HAP-1 (cell line): ENCODE measurements at regions of chr3 and their contacts with region 1.

Region 1: GRCh38 chr3:71652781-71653413 is 69.4 kb upstream of the FOXP1 start:
- DNase-seq: peak; percentile 62 to 74
- H3K4me3 ChIP-seq: no peak overlapping the region
- H3K4me1 ChIP-seq: peaks cover 3% of the 10 kb centered on the region; the same call in 1 of the 2 replicates
- H3K27me3 ChIP-seq: no peaks in the 10 kb centered on the region

Region 2: DNA sequence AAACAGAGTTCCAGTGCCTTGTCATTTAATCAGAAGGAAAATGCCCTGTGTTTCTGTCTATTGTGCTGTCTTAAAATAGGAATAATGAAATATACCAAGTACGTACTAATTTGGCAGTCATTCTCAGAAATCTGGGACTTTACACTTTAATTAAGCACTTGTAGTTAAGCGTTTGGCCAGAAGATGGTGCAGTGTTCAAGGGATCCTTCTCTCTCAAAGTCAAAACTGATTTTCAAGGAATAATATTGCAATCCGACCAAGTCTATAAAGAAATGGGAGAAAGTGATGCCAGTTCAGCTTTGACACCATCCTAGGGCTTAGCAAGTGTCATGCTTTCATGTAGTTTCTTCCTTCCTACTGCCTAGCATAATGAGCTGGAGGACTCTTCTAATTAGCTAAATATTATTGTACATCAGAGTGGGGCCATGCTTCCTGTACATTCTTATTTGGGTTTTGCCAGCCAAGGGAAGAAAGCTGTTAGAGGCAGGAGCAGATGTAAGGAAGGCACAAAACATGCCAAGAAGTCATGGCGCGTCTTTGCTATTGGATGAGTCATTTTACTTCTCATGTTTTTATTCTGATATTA is 1588.6 kb before region 1 on chr3:
- in situ Hi-C with region 1: loop called (anchors 10 kb)
- DNase-seq: peak; percentile 60 to 64
- H3K4me3 ChIP-seq: no peak overlapping the region
- H3K4me1 ChIP-seq: peaks cover 2% of the 10 kb centered on the region
- H3K27me3 ChIP-seq: no peaks in the 10 kb centered on the region

Region 3: GRCh38 chr3:70531063-70531657 is 1121.7 kb before region 1 on chr3:
- in situ Hi-C with region 1: loop called (anchors 25 kb)
- DNase-seq: peak in 1 of 2 experiments; percentile 68
- H3K4me3 ChIP-seq: no peak overlapping the region
- H3K4me1 ChIP-seq: peaks cover 41% of the 10 kb centered on the region
- H3K27me3 ChIP-seq: no peaks in the 10 kb centered on the region